ENCODE measurements at regions of chr7 and their contacts with region 1.

Region 1: DNA sequence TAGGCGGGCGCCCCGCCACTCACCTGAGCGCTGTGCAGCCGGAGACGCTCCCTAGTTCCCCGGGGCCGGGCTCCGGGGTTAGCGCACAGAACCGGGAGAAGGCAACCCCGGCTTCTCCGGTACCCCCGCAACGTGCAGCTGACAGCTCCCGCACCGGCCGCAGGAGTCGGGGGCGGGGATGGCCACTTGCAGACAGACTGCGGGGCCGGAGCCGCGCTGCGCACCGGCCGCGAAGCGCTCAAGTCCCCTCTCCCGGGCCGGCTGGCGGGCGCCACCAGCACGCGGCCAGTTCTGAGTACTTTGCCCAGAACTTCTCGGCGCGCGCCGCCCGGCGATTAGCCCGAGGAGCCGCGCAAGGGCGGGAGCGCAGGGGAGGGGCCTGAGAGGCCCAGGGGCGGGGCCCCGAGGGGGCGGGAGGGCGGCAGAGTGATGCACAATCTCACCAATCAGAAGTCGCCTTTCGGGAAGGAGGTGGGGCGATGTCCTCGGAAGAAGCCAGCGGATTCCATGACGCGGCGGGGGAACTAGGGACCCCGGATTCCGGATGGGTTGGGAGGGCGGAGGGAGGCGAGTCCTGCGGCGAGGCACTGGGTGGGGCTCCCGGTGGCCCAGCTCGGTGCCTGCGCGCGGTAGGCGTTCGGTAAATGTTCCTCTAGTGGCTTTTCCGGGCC is at the start of gene OSBPL3:
- DNase-seq: peak; percentile 97
- H3K4me3 Mint-ChIP-seq: peak within 1 kb of the TSS; percentile 93
- H3K27ac Mint-ChIP-seq: peak within 1 kb of the TSS; percentile 92
- H3K4me1 Mint-ChIP-seq: peaks cover 51% of the 10 kb centered on the region
- H3K27me3 Mint-ChIP-seq: no peaks in the 10 kb centered on the region
- total RNA-seq, gene OSBPL3: 41.2 to 45.1 TPM

Region 2: GRCh38 chr7:24812310-24812945 is 167.6 kb before region 1 on chr7:
- CTCF ChIA-PET with region 1: interaction called, 48 read pairs
- POLR2A ChIA-PET with region 1: no interaction called
- intact Hi-C with region 1: no loop called
- DNase-seq: peak; percentile 58
- H3K4me3 Mint-ChIP-seq: no peak overlapping the region
- H3K27ac Mint-ChIP-seq: no peak overlapping the region
- H3K4me1 Mint-ChIP-seq: no peaks in the 10 kb centered on the region
- H3K27me3 Mint-ChIP-seq: no peaks in the 10 kb centered on the region

Region 3: GRCh38 chr7:24869572-24869971 is 110.4 kb before region 1 on chr7:
- CTCF ChIA-PET with region 1: interaction called, 4 read pairs
- POLR2A ChIA-PET with region 1: interaction called, 3 read pairs
- intact Hi-C with region 1: loop called (anchors 1 kb)
- DNase-seq: no peak
- H3K4me3 Mint-ChIP-seq: no peak overlapping the region
- H3K27ac Mint-ChIP-seq: no peak overlapping the region
- H3K4me1 Mint-ChIP-seq: peaks cover 39% of the 10 kb centered on the region
- H3K27me3 Mint-ChIP-seq: no peaks in the 10 kb centered on the region

Region 4: GRCh38 chr7:24907311-24907886 is 72.6 kb before region 1 on chr7:
- CTCF ChIA-PET with region 1: interaction called, 7 read pairs
- POLR2A ChIA-PET with region 1: interaction called, 21 read pairs
- intact Hi-C with region 1: loop called (anchors 1 kb)
- DNase-seq: peak; percentile 56
- H3K4me3 Mint-ChIP-seq: no peak overlapping the region
- H3K27ac Mint-ChIP-seq: no peak overlapping the region
- H3K4me1 Mint-ChIP-seq: peaks cover 42% of the 10 kb centered on the region
- H3K27me3 Mint-ChIP-seq: no peaks in the 10 kb centered on the region

Region 5: DNA sequence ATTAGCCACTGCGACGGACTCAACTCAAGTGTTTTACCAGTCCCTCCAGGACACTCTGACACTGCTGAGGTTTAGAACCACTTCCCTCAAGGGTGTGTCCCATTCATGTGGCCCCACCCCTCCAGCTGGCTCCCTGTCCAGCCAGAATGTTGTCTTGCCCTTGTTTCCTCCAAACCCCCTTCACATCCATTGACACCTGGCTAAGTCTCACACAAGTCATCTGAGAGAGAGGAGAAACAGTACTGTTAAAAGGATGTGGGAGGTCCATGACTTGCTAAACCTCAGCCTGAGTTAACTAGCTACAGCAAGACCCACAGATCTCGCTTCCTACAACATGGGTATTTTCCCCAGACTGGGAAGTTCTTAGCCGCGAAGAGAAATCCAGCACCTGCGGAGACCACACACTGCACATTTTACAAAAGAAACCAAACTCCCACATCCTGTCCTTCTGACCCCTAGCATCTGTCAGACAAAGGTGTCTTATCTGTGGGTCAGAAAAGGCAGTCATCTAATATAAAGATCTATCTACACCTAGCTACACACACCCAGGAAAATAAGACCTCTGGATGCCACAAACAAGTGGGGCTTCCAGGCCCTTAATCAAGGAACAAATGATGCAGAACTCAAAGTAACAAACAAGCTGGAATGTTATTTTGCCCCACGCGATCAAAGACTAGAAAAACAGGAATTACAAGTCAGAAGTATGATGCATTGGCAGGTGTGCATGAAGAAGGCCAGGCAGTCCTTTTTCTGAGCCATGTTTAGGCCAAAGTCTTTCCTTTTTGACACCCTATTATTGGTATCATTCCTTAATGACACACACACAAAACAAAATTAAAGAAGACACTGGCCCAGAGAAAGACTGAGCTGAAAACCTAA is 13.9 kb before region 1 on chr7:
- CTCF ChIA-PET with region 1: interaction called, 15 read pairs
- POLR2A ChIA-PET with region 1: interaction called, 22 read pairs
- intact Hi-C with region 1: no loop called
- DNase-seq: peak; percentile 61
- H3K4me3 Mint-ChIP-seq: peak overlapping the region; percentile 36
- H3K27ac Mint-ChIP-seq: peak overlapping the region; percentile 80
- H3K4me1 Mint-ChIP-seq: peaks cover 82% of the 10 kb centered on the region
- H3K27me3 Mint-ChIP-seq: no peaks in the 10 kb centered on the region

Region 6: GRCh38 chr7:25093268-25093826 is 113.3 kb after region 1 on chr7:
- CTCF ChIA-PET with region 1: interaction called, 44 read pairs
- POLR2A ChIA-PET with region 1: no interaction called
- intact Hi-C with region 1: loop called (anchors 1 kb)
- DNase-seq: peak; percentile 88
- H3K4me3 Mint-ChIP-seq: no peak overlapping the region
- H3K27ac Mint-ChIP-seq: no peak overlapping the region
- H3K4me1 Mint-ChIP-seq: peaks cover 14% of the 10 kb centered on the region
- H3K27me3 Mint-ChIP-seq: peaks cover 2% of the 10 kb centered on the region

Region 7: GRCh38 chr7:25167262-25167843 is 187.4 kb after region 1 on chr7:
- CTCF ChIA-PET with region 1: no interaction called
- POLR2A ChIA-PET with region 1: no interaction called
- intact Hi-C with region 1: no loop called
- DNase-seq: no peak
- H3K4me3 Mint-ChIP-seq: no peak overlapping the region
- H3K27ac Mint-ChIP-seq: no peak overlapping the region
- H3K4me1 Mint-ChIP-seq: no peaks in the 10 kb centered on the region
- H3K27me3 Mint-ChIP-seq: no peaks in the 10 kb centered on the region

Region 8: DNA sequence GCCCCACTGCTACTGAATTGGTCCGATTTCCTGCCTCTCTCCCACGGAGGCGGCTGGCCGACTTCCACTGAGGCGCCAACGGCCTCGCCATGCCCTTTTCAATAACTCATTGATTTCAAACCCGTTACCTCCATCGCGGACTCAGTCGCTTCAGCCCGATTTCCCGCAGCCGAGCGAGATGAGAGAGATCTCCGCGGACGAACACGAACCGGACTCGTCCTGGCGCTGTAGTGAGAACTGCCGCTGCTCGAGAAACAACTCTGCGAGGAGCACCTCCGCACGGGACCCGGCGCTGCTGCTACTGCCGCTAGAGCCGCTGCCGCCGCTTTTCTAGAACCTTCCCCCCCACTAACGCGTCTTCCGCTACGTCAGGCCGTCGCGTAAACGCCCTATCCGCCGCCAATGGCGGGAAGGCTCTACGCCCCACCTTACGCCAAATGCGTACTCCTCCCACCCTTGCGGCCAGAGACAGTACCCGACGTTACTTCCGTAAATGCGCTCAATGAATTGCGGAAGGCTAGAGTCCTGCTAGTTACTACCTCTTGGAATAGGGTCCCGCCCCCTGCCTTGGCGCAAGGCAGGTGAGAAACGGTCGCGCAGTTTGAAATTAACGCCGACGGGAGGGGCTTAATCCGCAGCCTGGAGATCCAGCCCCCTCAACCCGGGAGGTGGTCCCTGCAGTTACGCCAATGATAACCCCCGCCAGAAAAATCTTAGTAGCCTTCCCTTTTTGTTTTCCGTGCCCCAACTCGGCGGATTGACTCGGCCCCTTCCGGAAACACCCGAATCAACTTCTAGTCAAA is 1220.6 kb after region 1 on chr7 and contains the start of gene HNRNPA2B1:
- CTCF ChIA-PET with region 1: no interaction called
- POLR2A ChIA-PET with region 1: no interaction called
- intact Hi-C with region 1: loop called (anchors 2 kb)
- DNase-seq: peak; percentile 98
- H3K4me3 Mint-ChIP-seq: peak within 1 kb of the TSS; percentile 99
- H3K27ac Mint-ChIP-seq: peak within 1 kb of the TSS; percentile 100
- H3K4me1 Mint-ChIP-seq: peaks cover 39% of the 10 kb centered on the region
- H3K27me3 Mint-ChIP-seq: peaks cover 6% of the 10 kb centered on the region
- total RNA-seq, gene HNRNPA2B1: 906 to 929 TPM